ENCODE measurements at regions of chr11 and their contacts with region 1.

Region 1: GRCh38 chr11:72267956-72268617 is 24.1 kb upstream of the PHOX2A start:
- DNase-seq: no peak
- ATAC-seq: no peak
- H3K4me3 Mint-ChIP-seq: no peak overlapping the region
- H3K27ac Mint-ChIP-seq: no peak overlapping the region
- H3K4me1 Mint-ChIP-seq: peaks cover under 1% of the 10 kb centered on the region
- H3K27me3 Mint-ChIP-seq: peaks cover 9% of the 10 kb centered on the region
- CTCF ChIP-seq: no peak

Region 2: DNA sequence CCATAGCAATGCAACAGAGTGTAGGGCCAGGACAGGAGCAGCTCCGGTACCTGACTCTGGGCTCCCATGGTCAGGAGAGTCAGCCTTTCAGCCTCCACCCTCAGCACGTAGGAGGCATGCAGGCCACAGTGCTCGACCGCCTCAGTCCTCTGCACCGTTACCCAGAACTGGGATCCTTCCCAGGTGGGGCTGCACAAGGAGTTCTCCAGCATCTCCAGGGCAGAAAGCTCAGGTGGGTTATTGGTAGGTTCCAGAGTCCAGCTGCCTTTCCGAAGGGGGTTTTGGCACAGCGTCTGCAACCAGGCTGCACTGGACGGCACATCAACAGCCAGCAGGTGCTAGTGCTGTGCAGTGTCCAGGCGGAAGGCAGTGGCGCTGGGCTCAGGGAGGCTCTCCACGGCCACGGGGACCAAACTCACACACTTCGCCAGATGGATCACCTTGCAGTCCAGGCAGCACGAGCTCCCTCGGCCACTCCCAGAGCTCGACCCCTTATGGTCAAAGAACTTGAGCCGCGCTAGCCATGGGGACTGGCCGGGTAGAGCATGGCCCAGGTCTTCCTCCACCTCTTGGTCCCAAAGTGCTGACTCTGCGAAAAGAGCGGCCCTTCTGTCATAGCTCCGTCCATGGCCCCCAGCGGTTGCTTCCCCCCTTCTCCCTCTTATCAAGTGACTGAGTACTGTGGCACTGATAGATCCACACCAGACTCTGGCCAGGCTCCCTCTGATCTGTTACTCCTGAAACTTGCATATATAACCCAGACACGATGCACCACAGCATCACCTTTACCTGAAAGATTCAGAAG is 17.2 kb before region 1 on chr11:
- CTCF ChIA-PET with region 1: no interaction called
- POLR2A ChIA-PET with region 1: no interaction called
- intact Hi-C with region 1: loop called (anchors 1 kb)
- DNase-seq: no peak
- ATAC-seq: no peak
- H3K4me3 Mint-ChIP-seq: no peak overlapping the region
- H3K27ac Mint-ChIP-seq: no peak overlapping the region
- H3K4me1 Mint-ChIP-seq: no peaks in the 10 kb centered on the region
- H3K27me3 Mint-ChIP-seq: peaks cover 21% of the 10 kb centered on the region
- CTCF ChIP-seq: no peak

Region 3: DNA sequence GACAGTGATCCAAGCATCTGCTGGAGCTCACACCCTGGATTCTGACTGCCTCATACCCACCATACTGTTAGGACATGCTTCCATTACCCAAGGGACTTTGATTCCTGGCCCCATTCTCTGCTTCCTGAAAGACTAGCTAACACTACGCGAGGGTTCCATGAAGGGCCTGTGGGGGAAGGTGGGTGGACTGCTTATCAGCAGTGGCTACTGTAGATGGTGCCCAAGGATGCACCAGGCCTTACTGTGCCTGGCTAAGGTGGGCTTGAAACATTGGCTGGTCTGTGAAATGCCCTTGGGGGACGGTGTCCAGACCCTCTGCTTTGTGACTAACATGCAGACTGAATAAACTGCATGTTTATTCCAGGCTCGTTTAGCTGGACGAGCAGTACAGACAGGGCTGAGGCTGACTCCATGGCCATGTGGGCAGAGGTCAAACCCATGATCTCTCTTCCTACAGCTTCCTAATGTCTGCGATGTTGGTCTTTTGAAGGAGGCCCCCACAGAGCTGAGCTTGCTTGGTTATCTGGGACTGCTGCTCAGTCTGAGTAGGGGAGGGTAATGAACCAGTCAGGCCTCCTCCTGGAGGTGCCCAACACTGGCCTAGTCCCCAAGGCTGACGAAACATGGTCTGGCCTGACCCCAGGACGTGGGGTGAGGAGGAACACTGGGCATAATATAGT is 24.2 kb after region 1 on chr11:
- CTCF ChIA-PET with region 1: no interaction called
- POLR2A ChIA-PET with region 1: no interaction called
- intact Hi-C with region 1: no loop called
- DNase-seq: no peak
- ATAC-seq: no peak
- H3K4me3 Mint-ChIP-seq: no peak overlapping the region
- H3K27ac Mint-ChIP-seq: no peak overlapping the region
- H3K4me1 Mint-ChIP-seq: peaks cover 3% of the 10 kb centered on the region
- H3K27me3 Mint-ChIP-seq: no peaks in the 10 kb centered on the region
- CTCF ChIP-seq: no peak

Measured in activated B cell treated with CpG ODN at 0.5 μM for 24 hours (primary cell).